Naive thymus-derived CD4-positive, alpha-beta T cell (primary cell): ENCODE measurements at regions of chr5 and their contacts with region 1.

Region 1: GRCh38 chr5:80308526-80308925 is 11.3 kb upstream of the SPZ1 start:
- DNase-seq: no peak
- ATAC-seq: no peak
- H3K4me3 ChIP-seq: no peak overlapping the region
- H3K4me3 Mint-ChIP-seq: no peak overlapping the region
- H3K27ac ChIP-seq: no peak overlapping the region
- H3K27ac Mint-ChIP-seq: no peak overlapping the region
- H3K4me1 ChIP-seq: no peaks in the 10 kb centered on the region
- H3K4me1 Mint-ChIP-seq: peaks cover 0 to 4% (median 0%) of the 10 kb centered on the region in 7 donors
- H3K27me3 ChIP-seq: no peaks in the 10 kb centered on the region
- H3K27me3 Mint-ChIP-seq: peaks cover 0 to 3% (median 0%) of the 10 kb centered on the region in 5 donors

Region 2: GRCh38 chr5:79857714-79858409 is 450.7 kb before region 1 on chr5:
- CTCF ChIA-PET with region 1: interaction called, 3 read pairs
- POLR2A ChIA-PET with region 1: no interaction called
- intact Hi-C with region 1: loop called in 1 of 2 experiments (anchors 1 kb)
- DNase-seq: peak; percentile 39 to 83 (median 64)
- ATAC-seq: peak; percentile 79
- H3K4me3 ChIP-seq: no peak overlapping the region
- H3K4me3 Mint-ChIP-seq: no peak overlapping the region
- H3K27ac ChIP-seq: no peak overlapping the region
- H3K27ac Mint-ChIP-seq: no peak overlapping the region
- H3K4me1 ChIP-seq: no peaks in the 10 kb centered on the region
- H3K4me1 Mint-ChIP-seq: peaks cover 0 to 2% (median 0%) of the 10 kb centered on the region in 7 donors
- H3K27me3 ChIP-seq: no peaks in the 10 kb centered on the region
- H3K27me3 Mint-ChIP-seq: peaks cover 0 to 22% (median 0%) of the 10 kb centered on the region in 5 donors

Region 3: GRCh38 chr5:79924936-79925893 is 383.3 kb before region 1 on chr5:
- CTCF ChIA-PET with region 1: no interaction called
- POLR2A ChIA-PET with region 1: no interaction called
- intact Hi-C with region 1: loop called in 1 of 2 experiments (anchors 5 kb)
- DNase-seq: peak in 6 of 9 donors; percentile 7 to 39 (median 22)
- ATAC-seq: no peak
- H3K4me3 ChIP-seq: no peak overlapping the region
- H3K4me3 Mint-ChIP-seq: no peak overlapping the region
- H3K27ac ChIP-seq: no peak overlapping the region
- H3K27ac Mint-ChIP-seq: no peak overlapping the region
- H3K4me1 ChIP-seq: no peaks in the 10 kb centered on the region
- H3K4me1 Mint-ChIP-seq: peaks cover 0 to 3% (median 0%) of the 10 kb centered on the region in 7 donors
- H3K27me3 ChIP-seq: no peaks in the 10 kb centered on the region
- H3K27me3 Mint-ChIP-seq: peaks cover 0 to 18% (median 0%) of the 10 kb centered on the region in 5 donors

Region 4: GRCh38 chr5:80275347-80275746 is 33.2 kb before region 1 on chr5:
- CTCF ChIA-PET with region 1: interaction called, 3 read pairs
- POLR2A ChIA-PET with region 1: no interaction called
- intact Hi-C with region 1: loop called in 1 of 2 experiments (anchors 2 kb)
- DNase-seq: peak in 6 of 9 donors; percentile 28 to 65 (median 48)
- ATAC-seq: peak; percentile 57
- H3K4me3 ChIP-seq: no peak overlapping the region
- H3K4me3 Mint-ChIP-seq: no peak overlapping the region
- H3K27ac ChIP-seq: no peak overlapping the region
- H3K27ac Mint-ChIP-seq: peak overlapping the region in 7 of 9 donors; percentile 0 to 75 (median 49)
- H3K4me1 ChIP-seq: peaks cover 0 to 19% of the 10 kb centered on the region in 2 donors
- H3K4me1 Mint-ChIP-seq: peaks cover 12 to 36% (median 27%) of the 10 kb centered on the region in 7 donors
- H3K27me3 ChIP-seq: no peaks in the 10 kb centered on the region
- H3K27me3 Mint-ChIP-seq: no peaks in the 10 kb centered on the region